ENCODE measurements at regions of chr17 and their contacts with region 1.

Region 1: DNA sequence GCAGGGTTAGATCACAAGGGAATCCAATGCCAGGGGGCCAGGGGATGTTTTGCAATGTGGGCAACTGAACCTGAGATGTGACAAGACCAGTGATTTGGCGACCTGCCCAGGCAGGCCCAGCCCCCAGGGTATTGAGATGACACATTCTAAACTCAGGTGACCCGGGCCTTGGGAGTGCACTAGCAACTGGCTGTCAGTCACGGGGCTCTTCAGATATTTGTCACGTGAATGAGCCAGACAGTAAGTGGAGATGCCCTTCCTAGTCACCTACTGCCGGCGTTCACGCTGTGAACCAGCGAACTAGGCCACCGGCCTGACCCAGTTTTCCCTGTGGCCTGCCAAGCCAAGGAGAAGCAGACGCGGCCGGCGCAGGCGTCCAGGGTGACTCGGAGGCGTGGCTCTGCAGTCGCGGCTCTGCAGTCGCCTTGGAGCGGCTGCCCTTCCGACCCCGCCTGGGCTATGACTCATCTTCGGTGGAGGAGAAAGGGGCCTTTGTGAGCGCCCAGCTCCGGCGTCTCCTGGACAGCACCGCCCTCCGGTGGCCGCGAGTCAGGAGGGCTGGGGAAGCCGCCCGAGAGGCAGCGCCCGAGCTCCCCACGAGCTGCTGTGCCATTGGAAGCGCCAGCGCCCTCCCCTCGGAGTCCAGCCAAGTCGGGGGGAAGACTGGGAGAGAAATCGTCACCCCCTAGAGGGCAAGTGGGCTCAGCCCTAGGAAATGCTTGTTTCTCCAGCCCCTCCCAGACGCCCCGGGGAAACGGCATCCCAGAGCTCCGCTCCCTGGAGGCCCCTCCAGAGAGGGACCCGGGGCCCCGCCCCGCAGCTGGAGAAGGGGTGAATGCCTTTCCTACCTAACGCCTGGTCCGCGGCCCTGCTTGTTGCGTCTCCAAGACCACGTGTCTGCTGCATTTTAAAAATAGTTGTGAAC is 38.8 kb downstream of the WSB1 start:
- DNase-seq: peak; percentile 96 to 98 (median 97)
- H3K4me3 ChIP-seq: peak overlapping the region; percentile 45 to 82 (median 68)
- H3K27ac ChIP-seq: peak overlapping the region; percentile 40 to 80
- H3K4me1 ChIP-seq: peaks cover 4 to 41% (median 29%) of the 10 kb centered on the region in 4 experiments
- H3K27me3 ChIP-seq: no peaks in the 10 kb centered on the region

Region 2: GRCh38 chr17:27236717-27237315 is 95.9 kb before region 1 on chr17:
- CTCF ChIA-PET with region 1: interaction called, 51 read pairs
- POLR2A ChIA-PET with region 1: interaction called, 4 read pairs
- DNase-seq: peak; percentile 78 to 89 (median 81)
- H3K4me3 ChIP-seq: no peak overlapping the region
- H3K27ac ChIP-seq: no peak overlapping the region
- H3K4me1 ChIP-seq: peaks cover 0 to 7% (median under 1%) of the 10 kb centered on the region in 4 experiments
- H3K27me3 ChIP-seq: no peaks in the 10 kb centered on the region

Region 3: GRCh38 chr17:27245230-27245696 is 87.5 kb before region 1 on chr17:
- CTCF ChIA-PET with region 1: interaction called, 11 read pairs
- POLR2A ChIA-PET with region 1: no interaction called
- DNase-seq: peak; percentile 72 to 81 (median 76)
- H3K4me3 ChIP-seq: peak overlapping the region in 3 of 7 experiments; percentile 24 to 59 (median 41)
- H3K27ac ChIP-seq: peak overlapping the region in 1 of 2 experiments; percentile 56
- H3K4me1 ChIP-seq: peaks cover 2 to 39% (median 17%) of the 10 kb centered on the region in 4 experiments
- H3K27me3 ChIP-seq: no peaks in the 10 kb centered on the region

Region 4: DNA sequence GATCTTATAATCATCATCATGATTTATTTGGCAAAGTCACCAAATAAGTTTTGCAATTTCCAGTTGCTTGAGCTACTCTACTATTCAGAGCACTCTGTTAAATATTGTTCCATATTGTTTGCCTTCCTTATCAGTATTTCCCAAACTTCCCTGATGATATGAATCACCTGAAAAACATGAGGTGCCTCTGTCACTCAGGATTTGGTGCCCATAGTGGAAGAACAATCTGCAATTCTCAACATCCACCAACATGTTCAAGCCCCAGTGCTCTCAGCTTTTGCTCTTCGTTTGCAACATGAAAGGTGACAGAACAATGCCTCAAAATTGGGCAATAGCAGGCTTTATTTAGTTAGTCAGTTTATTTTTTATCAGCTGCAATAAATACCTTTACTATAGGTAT is 67.4 kb before region 1 on chr17:
- CTCF ChIA-PET with region 1: no interaction called
- POLR2A ChIA-PET with region 1: no interaction called
- DNase-seq: no peak
- H3K4me3 ChIP-seq: no peak overlapping the region
- H3K27ac ChIP-seq: no peak overlapping the region
- H3K4me1 ChIP-seq: no peaks in the 10 kb centered on the region
- H3K27me3 ChIP-seq: no peaks in the 10 kb centered on the region

Region 5: DNA sequence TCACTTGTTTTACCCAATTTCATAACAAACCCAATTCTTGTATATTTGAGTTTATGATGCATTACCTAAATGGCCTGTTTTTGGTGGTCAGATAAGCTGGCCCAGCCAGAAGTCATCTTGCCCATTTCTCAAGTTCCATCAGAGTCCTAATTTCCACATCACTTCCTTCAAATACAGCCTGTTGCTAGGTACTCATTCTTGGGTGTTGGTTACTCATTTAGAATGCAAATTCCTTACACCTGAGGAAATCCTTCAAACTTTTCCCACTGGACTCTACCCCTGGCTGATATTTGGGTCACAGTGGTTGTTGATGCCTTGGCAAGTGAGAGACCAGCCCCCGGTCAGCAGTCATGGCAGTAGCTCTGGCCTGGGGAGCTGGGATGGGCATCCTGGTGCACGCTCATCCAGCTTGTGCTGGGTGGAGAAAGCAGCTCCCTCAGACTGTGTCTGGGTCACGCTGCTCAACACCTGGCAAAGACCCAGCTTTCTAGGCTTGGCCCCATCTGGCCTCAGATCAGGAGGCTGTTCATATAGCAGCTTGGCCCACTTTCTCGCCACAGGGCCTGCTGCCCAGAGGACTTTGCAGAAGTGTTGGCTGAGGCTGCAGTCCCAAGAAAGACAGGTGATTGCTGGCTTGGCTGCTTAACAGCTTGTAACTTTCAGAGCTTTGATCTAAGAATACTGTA is 13.1 kb before region 1 on chr17:
- CTCF ChIA-PET with region 1: interaction called, 12 read pairs
- POLR2A ChIA-PET with region 1: interaction called, 3 read pairs
- DNase-seq: peak in 2 of 3 donors; percentile 25 to 45
- H3K4me3 ChIP-seq: no peak overlapping the region
- H3K27ac ChIP-seq: no peak overlapping the region
- H3K4me1 ChIP-seq: peaks cover 0 to 5% (median 1%) of the 10 kb centered on the region in 4 experiments
- H3K27me3 ChIP-seq: no peaks in the 10 kb centered on the region

Region 6: DNA sequence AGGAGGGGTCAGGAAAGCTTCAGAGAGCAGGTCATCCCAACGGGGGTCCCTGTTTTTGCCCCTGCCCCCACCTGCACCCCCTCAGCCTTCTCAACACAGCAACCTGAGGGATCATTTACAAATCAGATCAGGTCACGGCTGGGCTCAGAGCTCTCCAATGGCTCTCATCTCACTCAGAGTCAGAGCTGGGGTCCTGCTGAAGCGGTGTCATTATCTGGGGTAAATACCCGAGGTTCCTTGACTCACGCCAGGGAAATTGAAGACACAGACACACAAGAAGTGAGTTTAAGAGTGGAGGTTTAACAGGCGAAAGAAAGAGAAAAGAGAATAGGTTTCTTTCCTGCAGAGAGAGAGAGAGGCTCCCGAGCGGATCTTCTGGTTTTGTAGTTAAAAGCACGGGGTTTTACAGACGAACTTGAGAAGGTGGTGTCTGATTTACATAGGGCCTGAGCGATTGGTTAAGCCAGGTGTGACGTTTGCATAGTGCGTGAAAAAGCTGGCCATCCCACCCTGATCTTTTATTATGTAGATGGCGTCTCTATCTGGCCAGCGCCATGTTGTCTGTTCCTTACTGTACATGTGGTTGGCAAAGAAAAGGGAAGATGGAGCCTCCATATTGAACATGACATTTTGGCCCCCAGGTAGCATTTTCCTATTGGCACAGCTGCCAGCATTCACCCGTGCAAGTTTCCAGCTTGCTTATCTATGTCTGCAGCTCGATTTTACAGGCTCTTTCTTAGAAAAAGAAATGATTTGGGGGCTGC is 12.6 kb after region 1 on chr17:
- CTCF ChIA-PET with region 1: interaction called, 34 read pairs
- POLR2A ChIA-PET with region 1: interaction called, 4 read pairs
- DNase-seq: peak in 1 of 3 donors; percentile 31
- H3K4me3 ChIP-seq: no peak overlapping the region
- H3K27ac ChIP-seq: peak overlapping the region; percentile 7 to 74
- H3K4me1 ChIP-seq: peaks cover 0 to 75% (median 45%) of the 10 kb centered on the region in 4 experiments
- H3K27me3 ChIP-seq: no peaks in the 10 kb centered on the region

Region 7: DNA sequence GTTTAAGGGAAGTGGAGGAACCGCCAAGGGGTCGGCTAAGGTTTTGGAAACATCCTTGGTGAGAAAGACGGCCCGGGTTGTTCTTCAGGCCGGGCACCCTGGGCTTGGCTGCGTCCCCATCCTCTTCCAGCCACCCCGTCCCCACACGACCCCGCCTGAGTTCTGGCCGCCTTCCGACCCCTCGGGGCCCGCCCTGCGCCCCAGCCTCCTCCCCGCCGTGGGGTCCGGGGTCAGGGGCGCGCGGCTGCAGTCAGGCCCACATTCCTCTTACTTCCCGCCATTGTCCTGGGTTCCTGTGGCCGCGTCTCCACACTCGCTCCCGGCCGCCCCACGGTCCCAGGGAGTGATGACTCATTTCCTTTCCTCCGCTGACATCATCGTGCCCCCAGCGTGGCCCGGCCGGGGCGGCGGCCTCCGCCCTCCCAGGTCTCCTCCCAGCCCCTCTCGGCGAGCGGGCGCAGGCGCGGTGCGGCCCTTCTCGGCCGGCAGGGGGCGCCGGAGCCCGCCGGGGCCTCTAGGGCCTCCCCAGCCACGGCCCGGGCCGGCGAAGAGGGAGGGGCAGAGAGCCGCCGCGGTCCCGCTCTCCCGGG is 20.8 kb after region 1 on chr17:
- CTCF ChIA-PET with region 1: interaction called, 13 read pairs
- POLR2A ChIA-PET with region 1: interaction called, 4 read pairs
- DNase-seq: peak; percentile 91 to 94 (median 93)
- H3K4me3 ChIP-seq: peak overlapping the region; percentile 51 to 83 (median 76)
- H3K27ac ChIP-seq: peak overlapping the region; percentile 85 to 96
- H3K4me1 ChIP-seq: peaks cover 0 to 32% (median 21%) of the 10 kb centered on the region in 4 experiments
- H3K27me3 ChIP-seq: no peaks in the 10 kb centered on the region

Measured in common myeloid progenitor, CD34-positive (primary cell).